Mammary epithelial cell (primary cell): ENCODE measurements at regions of chr11 and their contacts with region 1.

Region 1: DNA sequence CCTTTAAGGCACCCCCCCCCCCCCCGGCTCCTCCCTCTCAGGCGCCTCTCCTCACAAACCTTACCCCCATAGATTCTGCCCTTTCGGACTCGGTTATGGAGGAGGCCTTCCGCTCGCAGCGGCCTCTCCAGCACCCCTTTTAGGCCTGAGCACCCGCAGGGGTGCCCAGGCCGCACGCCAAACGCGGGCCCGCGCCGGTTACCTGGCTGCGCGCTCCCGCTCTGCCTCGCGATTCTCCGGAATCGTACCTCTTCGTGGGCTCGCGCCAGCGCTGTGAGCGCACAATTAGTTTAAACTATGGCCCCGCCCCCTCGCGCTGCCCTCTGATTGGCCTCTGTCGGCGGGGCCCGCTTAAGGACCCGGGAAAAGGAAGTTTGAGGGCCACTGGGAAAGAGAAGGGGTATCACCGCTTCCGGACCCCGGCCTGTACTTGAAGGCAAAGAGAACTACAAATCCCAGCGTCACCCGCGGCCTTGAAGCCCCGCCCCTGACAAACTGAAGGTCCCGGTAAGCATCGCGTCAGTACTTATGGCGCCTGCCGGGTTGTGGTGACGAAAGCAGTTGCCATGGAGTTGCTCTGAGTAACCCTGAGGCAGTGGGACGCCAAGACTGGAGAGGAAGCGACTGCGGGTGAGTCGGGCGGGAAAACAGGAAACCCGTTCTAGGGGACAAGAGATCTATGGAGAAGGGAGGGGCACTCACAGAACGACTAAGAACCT is at the starts of genes LRRC51 and NUMA1:
- DNase-seq: peak; percentile 100
- H3K4me3 ChIP-seq: peak within 1 kb of the TSS; percentile 69 to 80 (median 69)
- H3K27ac ChIP-seq: peak within 1 kb of the TSS; percentile 90
- H3K4me1 ChIP-seq: peaks cover 19% of the 10 kb centered on the region
- H3K27me3 ChIP-seq: no peaks in the 10 kb centered on the region
- CTCF ChIP-seq: no peak
- total RNA-seq, gene LRRC51: 4.3 to 10.3 TPM
- total RNA-seq, gene NUMA1: 126 to 175 TPM

Region 2: DNA sequence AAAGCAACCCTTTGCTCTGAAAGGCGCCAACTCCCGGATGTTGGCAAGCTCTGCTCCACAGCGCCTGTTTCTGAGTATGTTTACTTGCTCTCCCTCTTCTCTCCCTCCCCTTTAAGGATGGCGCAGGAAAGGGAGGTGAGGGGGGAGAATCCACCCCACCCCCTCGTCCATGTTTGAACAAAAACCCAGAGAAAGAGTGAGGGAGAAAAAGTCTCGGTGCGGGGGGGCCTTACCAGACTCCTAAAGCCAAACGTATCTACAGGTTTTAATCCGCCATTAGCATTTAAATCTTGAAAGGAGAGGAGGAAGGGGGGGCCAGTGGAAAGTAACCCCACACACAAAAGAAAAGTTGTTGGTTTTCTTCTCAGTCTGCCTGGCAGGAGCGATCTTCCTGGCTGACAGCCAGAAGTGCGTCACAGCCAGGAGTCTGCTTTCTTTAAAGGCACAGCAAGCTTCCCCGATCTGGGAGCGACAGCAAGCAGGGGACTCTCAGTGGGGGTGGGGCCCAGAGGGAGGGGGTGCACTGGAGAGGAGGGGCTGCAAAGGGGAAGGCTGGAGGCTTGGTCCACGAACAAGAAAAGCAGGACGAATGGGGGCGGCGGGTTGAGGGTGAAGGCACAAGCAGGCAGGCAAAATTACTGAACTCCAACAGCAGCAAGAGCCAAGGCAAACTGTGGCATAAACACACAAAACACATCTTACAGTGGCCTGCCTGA is 39.5 kb before region 1 on chr11:
- CTCF ChIA-PET with region 1: no interaction called
- dilution Hi-C with region 1: no loop called
- in situ Hi-C with region 1: loop called in 1 of 2 experiments (anchors 5 kb)
- intact Hi-C with region 1: loop called (anchors 1 kb)
- DNase-seq: peak; percentile 83
- H3K4me3 ChIP-seq: peak overlapping the region; percentile 52 to 66 (median 57)
- H3K27ac ChIP-seq: peak overlapping the region; percentile 78
- H3K4me1 ChIP-seq: peaks cover 44% of the 10 kb centered on the region
- H3K27me3 ChIP-seq: no peaks in the 10 kb centered on the region
- CTCF ChIP-seq: no peak

Region 3: DNA sequence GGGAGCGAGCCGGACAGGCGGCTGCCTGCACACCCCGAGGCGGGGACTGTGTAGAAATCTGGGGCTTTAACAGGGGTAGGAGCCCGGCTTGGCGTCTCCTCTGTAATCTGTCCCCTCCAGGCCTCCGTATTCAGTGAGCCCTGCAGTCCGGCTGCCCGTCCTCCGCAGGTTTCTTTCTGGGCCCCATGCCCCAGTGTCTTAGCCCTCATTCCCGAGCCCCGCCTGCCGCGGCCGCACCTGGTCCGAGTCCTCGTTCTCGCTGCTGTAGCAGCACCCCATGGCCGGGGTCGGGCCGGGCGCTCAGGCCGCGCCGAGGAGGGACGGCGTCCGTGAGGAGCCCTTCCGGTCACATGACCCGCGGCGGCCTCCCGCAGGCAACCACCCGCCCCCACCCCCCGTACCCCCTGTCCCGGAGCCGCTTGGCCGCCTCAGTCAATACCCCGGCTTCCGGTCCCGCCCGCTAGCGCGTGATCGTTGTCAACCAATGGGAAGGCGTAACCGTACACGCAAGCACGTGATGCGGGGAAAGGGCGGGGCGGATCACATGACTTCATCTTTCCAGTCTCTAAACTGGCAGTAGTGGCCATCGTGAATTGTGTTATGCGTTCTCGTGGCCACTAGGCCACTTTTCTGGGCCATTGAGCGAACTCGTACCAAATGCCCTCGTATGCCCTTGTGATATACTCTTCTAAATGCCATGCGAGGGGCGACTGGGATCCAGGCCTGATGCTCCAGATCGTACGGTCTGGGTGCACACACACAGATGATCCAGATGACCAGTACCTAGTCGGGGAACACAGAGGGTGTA is 22.7 kb after region 1 on chr11 and contains the start of gene LAMTOR1:
- CTCF ChIA-PET with region 1: no interaction called
- dilution Hi-C with region 1: no loop called
- in situ Hi-C with region 1: no loop called
- intact Hi-C with region 1: loop called (anchors 1 kb)
- DNase-seq: peak; percentile 95
- H3K4me3 ChIP-seq: peak within 1 kb of the TSS; percentile 80 to 94 (median 84)
- H3K27ac ChIP-seq: peak within 1 kb of the TSS; percentile 86
- H3K4me1 ChIP-seq: peaks cover 31% of the 10 kb centered on the region
- H3K27me3 ChIP-seq: no peaks in the 10 kb centered on the region
- CTCF ChIP-seq: peak; percentile 35 to 40
- total RNA-seq, gene LAMTOR1: 105 to 183 TPM

Region 4: GRCh38 chr11:72222907-72223614 is 142.6 kb after region 1 on chr11:
- CTCF ChIA-PET with region 1: no interaction called
- dilution Hi-C with region 1: no loop called
- in situ Hi-C with region 1: no loop called
- intact Hi-C with region 1: loop called (anchors 5 kb)
- DNase-seq: peak; percentile 87
- H3K4me3 ChIP-seq: peak overlapping the region; percentile 81 to 88 (median 85)
- H3K27ac ChIP-seq: peak overlapping the region; percentile 56
- H3K4me1 ChIP-seq: peaks cover 32% of the 10 kb centered on the region
- H3K27me3 ChIP-seq: no peaks in the 10 kb centered on the region
- CTCF ChIP-seq: peak in 1 of 2 donors; percentile 37

Region 5: DNA sequence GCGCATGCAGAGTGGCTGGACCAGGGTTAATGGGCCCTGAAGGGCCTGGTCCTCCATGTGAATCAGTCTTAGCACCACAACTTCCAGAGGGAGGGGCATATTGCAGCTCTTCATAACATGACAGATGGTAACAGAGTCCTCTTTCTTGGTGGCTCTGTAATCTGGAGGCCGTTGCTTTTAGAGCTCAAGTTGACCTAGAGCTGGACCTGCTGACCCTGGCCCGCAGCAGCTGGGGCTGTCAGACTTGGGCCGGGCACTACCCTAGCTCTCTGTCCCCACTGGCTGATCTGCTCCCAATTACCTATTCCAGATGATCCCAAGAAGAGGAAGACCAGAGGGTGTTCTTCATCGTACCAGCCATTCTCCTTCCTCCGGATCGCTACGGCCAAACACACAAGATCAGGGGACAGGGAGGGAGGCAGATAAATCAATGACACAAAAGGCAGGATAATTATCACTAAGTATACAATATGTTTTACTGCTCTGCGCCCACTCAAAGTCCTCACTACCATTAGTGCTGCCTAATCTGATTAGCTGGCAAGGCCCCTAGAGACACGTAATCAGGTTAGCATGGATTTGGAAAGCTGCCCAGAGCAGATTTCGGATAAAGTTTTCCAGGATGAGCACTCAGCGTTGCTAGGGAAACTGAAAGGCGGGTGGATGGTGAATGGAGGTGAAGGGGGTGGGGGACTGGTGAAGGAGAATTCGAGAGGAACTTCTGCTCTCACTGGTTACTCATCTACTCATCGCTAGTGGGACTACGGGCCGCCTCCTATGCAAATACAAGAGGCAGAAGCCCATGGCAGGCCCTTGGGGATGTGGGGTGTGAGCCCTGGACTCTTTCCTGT is 228.0 kb after region 1 on chr11:
- CTCF ChIA-PET with region 1: no interaction called
- dilution Hi-C with region 1: no loop called
- in situ Hi-C with region 1: no loop called
- intact Hi-C with region 1: no loop called
- DNase-seq: peak; percentile 58
- H3K4me3 ChIP-seq: no peak overlapping the region
- H3K27ac ChIP-seq: no peak overlapping the region
- H3K4me1 ChIP-seq: no peaks in the 10 kb centered on the region
- H3K27me3 ChIP-seq: no peaks in the 10 kb centered on the region
- CTCF ChIP-seq: no peak

Region 6: DNA sequence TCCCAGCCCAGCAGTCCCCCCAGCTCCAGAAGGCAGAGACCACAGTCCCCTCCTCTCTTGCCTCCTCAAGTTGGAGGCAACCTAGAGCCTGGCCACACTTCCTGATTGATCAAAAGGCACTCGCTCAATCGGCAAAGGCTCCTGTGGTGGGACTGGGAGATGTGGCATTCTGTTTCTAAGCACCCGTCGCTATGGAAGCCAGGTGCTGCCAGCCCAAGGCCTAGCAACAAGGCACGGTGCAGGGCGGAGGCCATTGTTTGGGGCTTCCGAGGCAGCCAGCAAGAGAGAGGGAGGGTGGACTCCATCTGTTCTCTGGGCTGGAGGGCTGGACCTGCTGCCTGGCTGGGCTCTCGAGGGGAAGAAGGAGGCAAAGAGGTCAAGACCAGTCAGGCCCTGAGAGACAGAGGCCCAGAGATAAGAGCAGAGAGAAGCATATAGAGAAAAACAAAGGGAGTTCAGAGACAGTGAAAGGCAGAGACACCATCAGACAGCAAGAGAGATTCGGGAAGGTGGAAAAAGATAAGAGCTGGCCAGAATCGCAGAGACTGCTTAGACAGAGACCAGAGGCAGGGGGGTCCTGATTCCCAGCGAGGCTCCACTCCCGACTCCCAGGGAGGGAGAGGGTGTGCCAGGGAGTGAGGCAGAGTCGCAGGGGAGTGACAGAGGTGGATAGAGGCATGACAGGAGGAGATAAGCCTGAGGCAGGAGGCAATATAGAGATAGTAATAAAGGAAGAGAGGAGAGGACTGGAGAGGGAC is 572.6 kb after region 1 on chr11:
- CTCF ChIA-PET with region 1: no interaction called
- dilution Hi-C with region 1: no loop called
- in situ Hi-C with region 1: no loop called
- intact Hi-C with region 1: no loop called
- DNase-seq: no peak
- H3K4me3 ChIP-seq: no peak overlapping the region
- H3K27ac ChIP-seq: no peak overlapping the region
- H3K4me1 ChIP-seq: no peaks in the 10 kb centered on the region
- H3K27me3 ChIP-seq: no peaks in the 10 kb centered on the region
- CTCF ChIP-seq: no peak